Heart left ventricle (tissue), 16 donors: ENCODE measurements at regions of chr10 and their contacts with region 1.

Region 1: GRCh38 chr10:61284222-61284890 is 168.8 kb downstream of the TMEM26 start:
- DNase-seq: peak in 1 of 5 donors; percentile 10
- ATAC-seq: peak in 1 of 4 donors; percentile 67
- H3K4me3 ChIP-seq: peak overlapping the region in 2 of 12 donors; percentile 6 to 31
- H3K27ac ChIP-seq: no peak overlapping the region
- H3K4me1 ChIP-seq: peaks cover 0 to 14% (median 0%) of the 10 kb centered on the region in 12 donors
- H3K27me3 ChIP-seq: no peaks in the 10 kb centered on the region
- CTCF ChIP-seq: peak; percentile 67 to 92 (median 77)
- POLR2A ChIP-seq: no peak

Region 2: DNA sequence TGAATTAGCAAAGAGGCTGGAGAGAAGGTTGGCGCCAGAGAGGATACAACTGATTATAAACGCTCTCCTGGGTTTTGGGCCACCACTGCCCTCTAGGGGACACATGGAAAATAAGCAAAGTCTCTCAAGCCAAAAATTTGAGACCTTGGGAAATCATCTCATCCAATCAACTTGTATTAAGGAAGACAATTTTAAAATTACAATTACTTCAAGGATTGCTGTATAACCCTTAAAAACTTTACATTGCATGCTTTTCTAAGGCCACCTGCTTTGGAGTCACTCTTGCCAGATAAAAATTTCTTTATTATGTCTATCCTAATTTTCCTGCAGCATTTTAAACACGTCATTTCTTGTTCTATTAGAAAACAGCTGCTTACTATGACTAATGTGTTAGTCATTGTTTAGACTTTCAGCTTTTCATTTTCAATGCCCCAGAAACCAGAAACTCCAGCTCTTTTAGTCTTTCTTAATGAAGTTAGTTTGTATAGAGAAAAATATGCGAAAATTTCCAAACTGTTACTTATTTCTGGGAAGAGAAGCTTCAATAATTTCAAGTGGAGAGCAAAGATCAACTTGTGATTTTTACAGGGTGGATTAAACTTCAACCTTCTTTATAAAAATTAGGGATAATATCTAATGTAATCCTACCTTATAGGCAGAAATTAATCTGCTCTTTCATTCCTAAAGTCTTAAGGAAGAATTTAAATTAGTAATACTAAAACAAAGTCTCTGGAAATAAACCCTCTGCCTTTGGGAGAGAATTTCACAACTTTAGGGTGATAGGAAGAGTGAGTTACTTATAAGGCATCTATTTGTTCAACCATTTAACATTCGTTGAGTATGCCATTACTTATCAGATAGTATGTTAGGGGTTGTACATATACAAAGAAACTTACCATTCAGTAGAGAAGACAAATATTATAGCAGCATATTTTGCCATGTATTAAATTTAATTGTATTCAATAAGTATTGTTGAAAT is 319.8 kb before region 1 on chr10:
- intact Hi-C with region 1: loop called in 8 of 10 experiments (anchors 5 to 10 kb)
- DNase-seq: peak; percentile 60 to 76 (median 63)
- ATAC-seq: peak; percentile 78 to 91 (median 82)
- H3K4me3 ChIP-seq: no peak overlapping the region
- H3K27ac ChIP-seq: peak overlapping the region in 10 of 12 donors; percentile 5 to 77 (median 38)
- H3K4me1 ChIP-seq: peaks cover 0 to 22% (median 8%) of the 10 kb centered on the region in 12 donors
- H3K27me3 ChIP-seq: no peaks in the 10 kb centered on the region
- CTCF ChIP-seq: peak; percentile 76 to 93 (median 84)
- POLR2A ChIP-seq: no peak

Region 3: GRCh38 chr10:60978287-60979115 is 305.9 kb before region 1 on chr10:
- intact Hi-C with region 1: loop called in 2 of 10 experiments (anchors 5 to 10 kb)
- DNase-seq: no peak
- ATAC-seq: no peak
- H3K4me3 ChIP-seq: no peak overlapping the region
- H3K27ac ChIP-seq: no peak overlapping the region
- H3K4me1 ChIP-seq: peaks cover 0 to 6% (median 0%) of the 10 kb centered on the region in 12 donors
- H3K27me3 ChIP-seq: no peaks in the 10 kb centered on the region
- CTCF ChIP-seq: no peak
- POLR2A ChIP-seq: no peak

Region 4: GRCh38 chr10:61140765-61141392 is 143.5 kb before region 1 on chr10:
- intact Hi-C with region 1: loop called (anchors 1 to 5 kb)
- DNase-seq: peak in 2 of 5 donors; percentile 28 to 33
- ATAC-seq: peak; percentile 37 to 75 (median 66)
- H3K4me3 ChIP-seq: no peak overlapping the region
- H3K27ac ChIP-seq: no peak overlapping the region
- H3K4me1 ChIP-seq: peaks cover 0 to 18% (median 2%) of the 10 kb centered on the region in 12 donors
- H3K27me3 ChIP-seq: no peaks in the 10 kb centered on the region
- CTCF ChIP-seq: peak; percentile 59 to 83 (median 76)
- POLR2A ChIP-seq: no peak